ENCODE measurements at regions of chr3 and their contacts with region 1.

Region 1: GRCh38 chr3:185983495-185984141 is 45.8 kb upstream of the TRA2B start:
- H3K4me3 Mint-ChIP-seq: no peak overlapping the region
- H3K27ac Mint-ChIP-seq: no peak overlapping the region
- H3K4me1 Mint-ChIP-seq: peaks cover 15% of the 10 kb centered on the region
- H3K27me3 Mint-ChIP-seq: peaks cover 12% of the 10 kb centered on the region

Region 2: DNA sequence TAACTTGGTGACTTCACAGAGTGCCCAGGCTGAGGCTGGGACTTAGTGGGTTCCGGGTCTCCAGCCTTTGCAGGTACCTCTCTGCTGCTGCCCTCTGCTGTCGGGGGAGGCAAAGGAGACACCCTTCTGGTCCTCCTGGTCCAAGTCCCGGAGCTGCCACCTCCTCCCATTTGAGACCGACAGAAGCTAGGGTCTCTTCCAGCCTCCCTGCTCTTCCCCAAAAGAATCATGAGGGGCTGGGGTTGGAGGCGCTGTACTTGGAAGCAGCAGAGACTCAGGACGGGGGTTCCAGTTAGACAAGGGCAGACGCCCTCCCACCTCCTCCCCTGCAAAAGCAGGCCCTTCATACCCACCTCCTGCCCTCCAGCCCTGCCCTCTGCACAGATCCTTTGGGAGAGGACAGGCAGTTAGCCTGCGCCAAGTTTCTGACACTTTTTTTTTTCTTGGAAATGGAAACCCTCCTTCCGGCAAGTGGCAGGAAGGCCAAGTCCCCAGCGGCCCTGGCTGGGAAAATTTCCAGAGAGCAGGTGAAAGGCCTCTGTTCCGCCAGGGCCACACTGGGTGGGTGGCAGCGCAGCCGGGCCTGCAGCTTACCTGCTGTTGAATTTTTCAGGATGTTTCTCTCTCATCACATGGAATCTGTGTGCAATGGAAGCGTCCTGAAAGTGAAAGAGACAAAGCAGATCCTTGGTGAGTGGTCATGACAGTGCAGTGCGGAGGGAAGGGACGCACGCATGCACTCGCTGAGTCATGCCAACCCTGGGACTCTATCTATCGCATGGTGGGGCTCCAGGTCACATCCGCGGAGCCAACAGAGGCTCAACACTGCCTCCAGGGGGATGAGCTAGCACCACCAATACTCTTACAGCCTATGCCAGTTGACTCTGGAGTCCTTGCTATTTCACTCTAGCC is 258.5 kb after region 1 on chr3:
- intact Hi-C with region 1: loop called (anchors 2 kb)
- H3K4me3 Mint-ChIP-seq: peak overlapping the region; percentile 56
- H3K27ac Mint-ChIP-seq: peak overlapping the region; percentile 23
- H3K4me1 Mint-ChIP-seq: peaks cover 15% of the 10 kb centered on the region
- H3K27me3 Mint-ChIP-seq: no peaks in the 10 kb centered on the region

Region 3: DNA sequence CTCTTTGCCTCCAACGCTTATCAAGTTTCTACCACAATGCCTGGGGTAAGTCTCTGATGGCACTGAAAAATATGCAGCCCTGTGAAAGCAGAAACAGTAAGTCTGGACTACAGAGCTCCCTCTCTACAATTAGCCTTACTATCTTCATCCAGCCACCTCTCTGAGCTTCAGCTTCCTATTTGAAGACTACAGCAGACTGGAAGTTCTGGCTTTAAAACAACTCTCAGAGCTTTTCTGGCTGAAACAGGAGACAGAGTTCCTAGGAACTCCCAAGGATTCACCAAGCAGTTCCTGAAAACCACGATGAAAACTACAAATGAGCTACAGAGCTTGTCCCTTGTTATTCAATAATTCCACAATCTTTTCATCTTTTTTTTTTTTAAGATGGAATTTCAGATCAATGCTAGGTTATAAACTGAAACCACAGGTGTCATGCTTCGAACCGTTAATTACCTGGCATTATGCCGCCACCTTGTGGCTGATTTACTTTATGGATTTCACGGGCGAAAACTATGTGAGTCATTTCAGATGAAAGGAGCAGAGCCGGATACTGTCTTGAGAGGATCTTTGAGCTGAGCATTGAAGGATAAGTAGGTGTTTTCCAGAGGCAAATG is 556.7 kb after region 1 on chr3:
- intact Hi-C with region 1: loop called (anchors 2 kb)
- H3K4me3 Mint-ChIP-seq: no peak overlapping the region
- H3K27ac Mint-ChIP-seq: peak overlapping the region; percentile 7
- H3K4me1 Mint-ChIP-seq: peaks cover 39% of the 10 kb centered on the region
- H3K27me3 Mint-ChIP-seq: no peaks in the 10 kb centered on the region

Region 4: DNA sequence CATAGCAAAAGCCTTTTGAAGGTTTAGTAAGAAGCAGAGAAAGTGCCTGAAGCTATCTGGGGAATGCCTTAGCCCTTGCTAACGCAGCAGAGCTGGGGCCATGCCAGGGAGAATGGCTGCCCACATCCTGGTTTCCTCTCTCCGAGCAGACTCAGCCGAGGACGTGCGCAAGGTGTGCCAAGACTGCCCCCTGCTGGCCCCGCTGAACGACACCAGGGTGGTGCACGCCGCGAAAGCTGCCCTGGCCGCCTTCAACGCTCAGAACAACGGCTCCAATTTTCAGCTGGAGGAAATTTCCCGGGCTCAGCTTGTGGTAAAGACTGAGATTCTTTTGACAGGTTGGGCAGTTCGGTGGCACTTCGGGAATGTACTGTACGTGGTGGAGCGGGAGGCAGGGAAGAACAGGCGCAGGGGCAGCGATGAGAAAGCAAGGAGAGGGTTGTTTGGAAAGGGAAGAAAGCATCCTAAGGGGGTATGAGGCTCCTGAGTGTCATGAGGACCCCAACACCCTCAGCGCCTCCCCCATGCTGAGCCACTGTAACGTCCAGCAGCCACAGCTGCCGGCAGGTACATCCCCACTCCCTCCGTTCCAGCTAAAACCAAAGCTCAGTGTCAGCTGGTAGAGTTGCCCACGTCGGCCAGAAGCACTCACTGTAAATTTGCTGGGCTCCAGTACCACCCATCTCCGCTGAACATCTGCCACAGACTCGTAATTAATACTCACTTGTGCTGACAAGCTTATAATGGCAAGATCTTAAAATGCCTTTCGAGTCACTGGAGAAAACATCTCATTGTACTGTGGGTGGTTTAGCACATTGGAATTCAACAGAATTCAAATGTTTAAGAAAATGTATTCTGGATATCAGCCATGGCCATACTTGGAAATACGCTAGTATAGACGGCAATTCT is 633.7 kb after region 1 on chr3:
- intact Hi-C with region 1: loop called (anchors 5 kb)
- H3K4me3 Mint-ChIP-seq: peak overlapping the region; percentile 60
- H3K27ac Mint-ChIP-seq: no peak overlapping the region
- H3K4me1 Mint-ChIP-seq: peaks cover 14% of the 10 kb centered on the region
- H3K27me3 Mint-ChIP-seq: peaks cover 46% of the 10 kb centered on the region